Activated CD8-positive, alpha-beta T cell treated with anti-CD3 and anti-CD28 coated beads for 36 hours (primary cell): ENCODE measurements at regions of chr7 and their contacts with region 1.

Region 1: GRCh38 chr7:27739909-27740448 is at the start of gene TAX1BP1:
- DNase-seq: peak; percentile 95
- ATAC-seq: peak; percentile 94
- H3K4me3 Mint-ChIP-seq: peak within 1 kb of the TSS; percentile 83
- H3K27ac Mint-ChIP-seq: peak within 1 kb of the TSS; percentile 96
- H3K4me1 Mint-ChIP-seq: peaks cover 32% of the 10 kb centered on the region
- H3K27me3 Mint-ChIP-seq: no peaks in the 10 kb centered on the region
- CTCF ChIP-seq: no peak
- total RNA-seq, gene TAX1BP1: 90.5 to 94.6 TPM

Region 2: GRCh38 chr7:27662490-27663205 is 77.3 kb before region 1 on chr7 and contains the start of gene HIBADH:
- CTCF ChIA-PET with region 1: interaction called, 3 read pairs
- POLR2A ChIA-PET with region 1: interaction called, 16 read pairs
- intact Hi-C with region 1: loop called (anchors 2 kb)
- DNase-seq: peak; percentile 96
- ATAC-seq: peak; percentile 98
- H3K4me3 Mint-ChIP-seq: peak within 1 kb of the TSS; percentile 80
- H3K27ac Mint-ChIP-seq: peak within 1 kb of the TSS; percentile 86
- H3K4me1 Mint-ChIP-seq: peaks cover 24% of the 10 kb centered on the region
- H3K27me3 Mint-ChIP-seq: no peaks in the 10 kb centered on the region
- CTCF ChIP-seq: no peak
- total RNA-seq, gene HIBADH: 20.7 to 20.9 TPM

Region 3: GRCh38 chr7:27677912-27678612 is 61.9 kb before region 1 on chr7:
- CTCF ChIA-PET with region 1: no interaction called
- POLR2A ChIA-PET with region 1: no interaction called
- intact Hi-C with region 1: no loop called
- DNase-seq: no peak
- ATAC-seq: no peak
- H3K4me3 Mint-ChIP-seq: no peak overlapping the region
- H3K27ac Mint-ChIP-seq: no peak overlapping the region
- H3K4me1 Mint-ChIP-seq: peaks cover 6% of the 10 kb centered on the region
- H3K27me3 Mint-ChIP-seq: no peaks in the 10 kb centered on the region
- CTCF ChIP-seq: no peak